ENCODE measurements at regions of chr12 and their contacts with region 1.

Region 1: DNA sequence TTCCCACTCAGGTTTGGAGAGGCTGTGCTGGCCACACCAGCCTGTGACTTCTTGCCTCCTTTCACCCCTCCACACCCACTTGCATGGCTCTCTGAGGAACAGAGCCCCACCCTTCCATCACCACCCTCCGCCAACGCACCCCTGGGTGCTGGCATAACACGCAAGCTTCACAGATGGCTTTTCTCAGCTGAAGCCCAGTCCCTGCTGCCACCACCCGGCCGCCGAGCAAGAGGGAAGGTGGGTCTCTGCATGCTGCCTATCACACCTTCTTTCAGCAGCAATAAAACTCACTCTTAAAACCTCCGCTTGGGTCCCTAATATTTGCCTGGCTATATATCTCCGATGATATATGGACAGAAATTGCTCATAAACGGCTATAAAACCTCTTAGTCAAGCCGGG is 41.6 kb downstream of the SMUG1 start:
- DNase-seq: peak in 1 of 2 donors; percentile 87
- ATAC-seq: no peak
- H3K4me3 ChIP-seq: no peak overlapping the region
- H3K27ac ChIP-seq: no peak overlapping the region
- H3K4me1 ChIP-seq: no peaks in the 10 kb centered on the region
- H3K27me3 ChIP-seq: no peaks in the 10 kb centered on the region

Region 2: DNA sequence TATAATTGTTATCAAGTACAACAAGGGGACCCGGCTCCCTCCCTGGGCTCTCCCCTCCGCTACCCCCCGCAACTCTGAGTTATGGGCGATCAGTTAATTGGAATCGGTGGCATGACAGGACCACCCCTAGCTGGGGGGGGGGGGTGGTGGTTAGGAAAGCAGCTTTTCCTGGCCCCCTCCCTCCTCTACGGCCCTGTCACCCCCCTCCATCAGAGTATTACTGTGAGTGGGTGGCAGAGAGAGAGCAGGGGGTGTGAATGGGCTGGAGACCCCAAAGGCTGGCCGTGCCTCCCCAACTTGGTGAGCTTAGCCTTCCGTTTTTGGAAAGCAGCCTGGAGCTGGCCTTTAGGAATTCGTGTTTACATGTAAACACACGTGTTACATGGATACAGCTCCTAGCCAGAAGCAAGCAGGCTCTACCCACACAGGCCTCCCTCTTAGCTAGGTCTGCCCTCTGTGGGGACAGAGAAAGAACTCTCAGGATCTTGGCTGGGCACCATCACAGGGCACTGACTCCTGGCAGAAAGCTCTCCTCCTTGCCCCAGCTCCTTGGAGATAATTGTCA is 94.7 kb before region 1 on chr12:
- intact Hi-C with region 1: no loop called
- DNase-seq: no peak
- ATAC-seq: peak; percentile 72
- H3K4me3 ChIP-seq: no peak overlapping the region
- H3K27ac ChIP-seq: no peak overlapping the region
- H3K4me1 ChIP-seq: no peaks in the 10 kb centered on the region
- H3K27me3 ChIP-seq: no peaks in the 10 kb centered on the region

Region 3: GRCh38 chr12:54182086-54182485 is 34.9 kb after region 1 on chr12:
- intact Hi-C with region 1: loop called in 1 of 2 experiments (anchors 5 kb)
- DNase-seq: no peak
- ATAC-seq: no peak
- H3K4me3 ChIP-seq: no peak overlapping the region
- H3K27ac ChIP-seq: no peak overlapping the region
- H3K4me1 ChIP-seq: no peaks in the 10 kb centered on the region
- H3K27me3 ChIP-seq: no peaks in the 10 kb centered on the region

Measured in aorta (tissue), 5 donors.